HCT116 (cell line): ENCODE measurements at regions of chr12 and their contacts with region 1.

Region 1: GRCh38 chr12:11730299-11731041 is 81.0 kb downstream of the ETV6 start:
- DNase-seq: peak; percentile 12
- ATAC-seq: peak; percentile 63; the same call in 1 of the 2 replicates
- H3K4me3 ChIP-seq: no peak overlapping the region
- H3K27ac ChIP-seq: peak overlapping the region; percentile 48
- H3K4me1 ChIP-seq: peaks cover 33 to 34% of the 10 kb centered on the region in 2 experiments
- H3K27me3 ChIP-seq: no peaks in the 10 kb centered on the region
- CTCF ChIP-seq: no peak
- POLR2A ChIP-seq: no peak
- RAD21 ChIP-seq: no peak

Region 2: DNA sequence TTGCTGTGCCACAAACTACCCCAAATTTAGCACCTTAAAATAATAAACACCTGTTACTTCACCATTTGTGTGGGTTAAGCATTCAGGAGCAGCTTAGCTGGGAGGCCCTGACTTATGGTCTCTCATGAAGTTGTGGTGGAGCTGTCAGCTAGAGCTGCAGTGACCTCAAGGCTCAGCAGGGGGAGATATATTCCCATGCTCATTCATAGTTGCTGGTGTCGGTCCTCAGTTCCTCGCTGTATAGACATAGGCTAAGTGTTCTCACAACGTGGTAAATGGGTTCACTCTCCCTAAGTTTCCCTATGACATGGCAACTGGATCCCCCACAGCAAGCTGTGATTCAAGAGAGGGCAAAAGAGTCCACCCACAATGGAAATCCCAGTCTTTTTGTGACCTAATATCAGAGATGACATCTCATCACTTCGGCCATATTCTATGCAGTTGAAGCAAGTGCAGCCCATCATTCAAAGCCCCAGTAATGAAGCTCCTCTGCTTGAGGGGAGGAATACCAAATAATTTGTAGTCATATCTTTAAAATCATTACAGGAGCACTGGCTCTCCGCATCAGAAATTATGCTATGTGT is 502.1 kb before region 1 on chr12:
- CTCF ChIA-PET with region 1: no interaction called
- POLR2A ChIA-PET with region 1: no interaction called
- RAD21 ChIA-PET with region 1: no interaction called
- intact Hi-C with region 1: no loop called
- DNase-seq: peak; percentile 35
- ATAC-seq: peak; percentile 100
- H3K4me3 ChIP-seq: no peak overlapping the region
- H3K27ac ChIP-seq: no peak overlapping the region
- H3K4me1 ChIP-seq: no peaks in the 10 kb centered on the region
- H3K27me3 ChIP-seq: peaks cover 36% of the 10 kb centered on the region; the same call in 1 of the 2 replicates
- CTCF ChIP-seq: peak; percentile 78 to 89 (median 83)
- POLR2A ChIP-seq: no peak
- RAD21 ChIP-seq: peak; percentile 82

Region 3: DNA sequence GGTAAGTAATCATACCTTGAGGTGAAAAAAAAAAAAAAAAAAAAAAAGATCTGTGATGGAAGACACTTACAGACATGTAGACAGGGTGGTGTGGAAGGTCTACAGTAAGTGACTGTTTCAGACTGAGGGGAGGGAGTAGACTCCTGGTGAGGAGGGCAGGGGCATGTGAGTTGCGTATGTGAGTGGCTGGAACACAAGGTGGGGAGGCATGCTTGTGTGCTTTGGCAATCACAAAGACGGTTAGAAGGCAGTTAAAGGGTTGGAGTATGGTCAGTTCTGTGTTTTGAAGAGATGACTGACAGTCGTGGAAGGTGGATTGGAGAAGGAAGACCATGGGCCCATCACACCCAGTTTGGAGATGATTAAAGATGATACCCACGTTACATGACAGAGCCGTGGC is 15.8 kb before region 1 on chr12:
- CTCF ChIA-PET with region 1: no interaction called
- POLR2A ChIA-PET with region 1: interaction called, 3 read pairs
- RAD21 ChIA-PET with region 1: no interaction called
- intact Hi-C with region 1: loop called (anchors 1 kb)
- DNase-seq: no peak
- ATAC-seq: no peak
- H3K4me3 ChIP-seq: no peak overlapping the region
- H3K27ac ChIP-seq: no peak overlapping the region
- H3K4me1 ChIP-seq: peaks cover 5 to 7% of the 10 kb centered on the region in 2 experiments
- H3K27me3 ChIP-seq: no peaks in the 10 kb centered on the region
- CTCF ChIP-seq: no peak
- POLR2A ChIP-seq: no peak
- RAD21 ChIP-seq: no peak

Region 4: DNA sequence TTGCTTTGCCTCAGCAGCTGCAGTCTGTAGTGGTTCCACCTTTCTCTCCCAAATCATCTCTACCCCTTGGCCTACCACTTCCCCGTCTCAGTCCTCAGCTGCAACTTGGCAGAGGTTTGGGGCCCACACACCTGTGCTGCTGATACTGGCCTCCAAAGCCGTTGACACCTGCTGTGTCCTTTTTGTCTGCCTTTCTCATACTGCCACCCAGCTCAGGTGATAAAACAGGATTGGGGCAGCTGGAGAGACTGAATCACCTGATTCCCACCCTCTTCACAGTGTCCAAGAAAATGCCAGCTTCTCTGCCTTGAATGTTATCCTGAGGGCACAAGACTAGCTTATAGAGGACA is 22.7 kb after region 1 on chr12:
- CTCF ChIA-PET with region 1: no interaction called
- POLR2A ChIA-PET with region 1: no interaction called
- RAD21 ChIA-PET with region 1: no interaction called
- intact Hi-C with region 1: no loop called
- DNase-seq: no peak
- ATAC-seq: no peak
- H3K4me3 ChIP-seq: no peak overlapping the region
- H3K27ac ChIP-seq: no peak overlapping the region
- H3K4me1 ChIP-seq: no peaks in the 10 kb centered on the region
- H3K27me3 ChIP-seq: no peaks in the 10 kb centered on the region
- CTCF ChIP-seq: no peak
- POLR2A ChIP-seq: no peak
- RAD21 ChIP-seq: no peak